Activated CD8-positive, alpha-beta T cell treated with anti-CD3 and anti-CD28 coated beads for 36 hours (primary cell): ENCODE measurements at regions of chr3 and their contacts with region 1.

Region 1: GRCh38 chr3:143119009-143119914 is at the start of gene CHST2:
- DNase-seq: peak; percentile 76
- ATAC-seq: peak; percentile 84
- H3K4me3 Mint-ChIP-seq: peak within 1 kb of the TSS; percentile 87
- H3K27ac Mint-ChIP-seq: peak within 1 kb of the TSS; percentile 68
- H3K4me1 Mint-ChIP-seq: peaks cover 29% of the 10 kb centered on the region
- H3K27me3 Mint-ChIP-seq: peaks cover 5% of the 10 kb centered on the region
- CTCF ChIP-seq: no peak
- total RNA-seq, gene CHST2: 6.0 to 6.9 TPM

Region 2: DNA sequence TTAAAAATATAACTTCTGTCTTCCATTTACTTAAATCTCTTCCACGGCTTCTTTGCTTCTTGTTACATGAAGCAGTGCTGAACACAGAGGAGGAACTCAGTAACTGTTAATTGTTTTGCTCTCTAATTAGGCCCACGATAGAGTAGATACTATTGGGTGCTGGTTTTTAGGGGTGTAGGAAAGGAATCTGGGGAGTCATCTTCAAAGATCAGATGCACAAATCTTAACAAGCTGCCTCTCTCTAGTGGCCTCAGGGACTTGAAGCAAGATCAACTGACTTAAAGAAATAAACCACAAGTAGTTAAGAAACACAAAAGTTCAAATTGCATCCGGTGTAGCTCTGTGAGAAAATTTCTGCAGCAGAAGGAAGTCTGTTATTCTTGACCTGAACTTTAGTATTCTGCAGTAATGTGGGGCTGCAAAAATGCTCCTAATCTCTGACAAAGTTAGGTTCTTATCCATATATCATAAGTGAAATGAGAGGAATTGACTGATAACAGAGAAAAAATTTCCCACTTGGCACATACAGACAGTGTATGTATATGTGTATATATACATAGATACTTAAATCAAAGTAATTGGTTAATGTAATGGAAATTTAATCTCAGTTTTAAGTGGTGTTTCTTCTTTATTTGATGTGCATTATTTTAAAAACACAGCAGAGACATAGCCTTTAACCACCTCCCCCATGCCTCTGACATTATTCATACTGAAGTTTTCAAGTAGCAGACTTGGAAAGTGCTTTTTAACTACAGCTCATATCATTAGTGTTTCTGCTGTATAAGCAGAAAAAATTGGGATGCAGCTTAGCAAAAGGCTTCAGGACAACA is 52.1 kb after region 1 on chr3:
- CTCF ChIA-PET with region 1: interaction called, 13 read pairs
- POLR2A ChIA-PET with region 1: interaction called, 5 read pairs
- intact Hi-C with region 1: loop called (anchors 5 kb)
- DNase-seq: peak; percentile 40
- ATAC-seq: peak; percentile 73
- H3K4me3 Mint-ChIP-seq: peak overlapping the region; percentile 47
- H3K27ac Mint-ChIP-seq: peak overlapping the region; percentile 97
- H3K4me1 Mint-ChIP-seq: peaks cover 79% of the 10 kb centered on the region
- H3K27me3 Mint-ChIP-seq: no peaks in the 10 kb centered on the region
- CTCF ChIP-seq: no peak

Region 3: DNA sequence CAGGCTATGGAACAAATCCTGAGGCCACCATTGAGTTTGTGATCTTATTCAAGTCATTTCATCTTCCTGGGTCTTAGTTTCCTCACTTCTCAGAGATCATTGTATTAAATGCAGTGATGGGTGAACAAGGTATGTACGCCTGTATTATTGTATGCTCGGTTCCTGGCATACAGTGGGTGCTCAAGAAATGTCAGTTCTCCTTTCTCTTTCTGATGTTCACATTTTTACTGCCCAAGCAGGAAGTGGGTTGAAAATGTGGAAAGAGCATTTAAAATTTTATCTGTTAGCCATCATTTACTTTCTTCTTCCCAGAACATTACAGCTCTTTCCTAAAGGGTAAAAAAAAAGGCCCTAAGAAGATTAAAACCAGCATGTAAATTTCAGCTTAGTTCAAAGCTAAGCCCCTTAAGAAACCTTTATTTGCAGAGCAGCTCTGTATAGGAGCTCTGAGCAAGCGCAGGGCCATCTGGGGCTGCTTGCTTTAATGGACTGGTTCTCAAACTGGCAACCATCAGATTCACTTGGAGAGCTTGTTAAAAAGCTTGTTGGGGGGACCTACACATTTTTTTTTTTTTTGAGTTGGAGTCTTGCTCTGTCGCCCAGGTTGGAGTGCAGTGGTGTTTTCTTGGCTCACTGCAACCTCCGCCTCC is 179.7 kb after region 1 on chr3:
- CTCF ChIA-PET with region 1: interaction called, 12 read pairs
- POLR2A ChIA-PET with region 1: no interaction called
- intact Hi-C with region 1: no loop called
- DNase-seq: no peak
- ATAC-seq: no peak
- H3K4me3 Mint-ChIP-seq: no peak overlapping the region
- H3K27ac Mint-ChIP-seq: no peak overlapping the region
- H3K4me1 Mint-ChIP-seq: peaks cover 42% of the 10 kb centered on the region
- H3K27me3 Mint-ChIP-seq: no peaks in the 10 kb centered on the region
- CTCF ChIP-seq: no peak

Region 4: DNA sequence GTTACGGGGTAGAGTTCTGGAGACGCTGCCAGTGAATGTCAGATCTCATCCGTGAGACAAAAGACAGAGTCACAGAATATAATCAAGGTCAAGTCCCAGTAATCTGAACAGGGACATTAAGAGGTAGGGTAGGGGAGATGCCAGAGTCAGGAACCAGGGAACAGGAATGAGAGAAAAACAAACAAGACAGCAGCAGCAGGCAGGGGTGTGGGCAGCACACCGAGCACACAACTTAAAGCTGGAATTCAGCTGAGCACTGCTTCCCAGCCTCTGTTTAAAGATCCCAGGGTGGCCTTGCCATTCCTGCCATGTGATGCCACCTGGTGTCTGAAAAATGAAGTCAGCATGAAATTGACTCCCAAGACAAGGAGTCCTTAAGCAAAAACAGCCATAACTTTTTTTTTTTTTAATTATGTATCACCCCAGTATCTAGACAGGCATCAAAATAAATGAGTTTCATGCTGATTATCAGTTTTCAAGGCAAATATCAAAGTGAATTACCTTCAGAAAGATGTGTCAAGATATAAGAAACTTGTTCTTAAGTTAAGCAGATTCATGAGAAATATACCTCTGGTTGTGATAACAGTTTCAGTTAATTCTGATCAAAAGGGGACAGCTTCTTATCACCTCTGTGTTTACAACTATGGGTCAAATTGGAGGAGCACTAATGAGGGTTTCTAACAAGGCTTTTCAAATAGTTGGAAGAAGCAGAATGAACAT is 525.3 kb after region 1 on chr3:
- CTCF ChIA-PET with region 1: interaction called, 7 read pairs
- POLR2A ChIA-PET with region 1: no interaction called
- intact Hi-C with region 1: loop called (anchors 10 kb)
- DNase-seq: peak; percentile 38
- ATAC-seq: no peak
- H3K4me3 Mint-ChIP-seq: no peak overlapping the region
- H3K27ac Mint-ChIP-seq: no peak overlapping the region
- H3K4me1 Mint-ChIP-seq: no peaks in the 10 kb centered on the region
- H3K27me3 Mint-ChIP-seq: no peaks in the 10 kb centered on the region
- CTCF ChIP-seq: peak; percentile 49